ENCODE measurements at regions of chr14 and their contacts with region 1.

Region 1: GRCh38 chr14:83923842-83924241 is 1606.1 kb upstream of the FLRT2 start:
- DNase-seq: no peak
- H3K4me3 ChIP-seq: no peak overlapping the region
- H3K27ac ChIP-seq: no peak overlapping the region
- H3K4me1 ChIP-seq: no peaks in the 10 kb centered on the region
- CTCF ChIP-seq: no peak

Region 2: DNA sequence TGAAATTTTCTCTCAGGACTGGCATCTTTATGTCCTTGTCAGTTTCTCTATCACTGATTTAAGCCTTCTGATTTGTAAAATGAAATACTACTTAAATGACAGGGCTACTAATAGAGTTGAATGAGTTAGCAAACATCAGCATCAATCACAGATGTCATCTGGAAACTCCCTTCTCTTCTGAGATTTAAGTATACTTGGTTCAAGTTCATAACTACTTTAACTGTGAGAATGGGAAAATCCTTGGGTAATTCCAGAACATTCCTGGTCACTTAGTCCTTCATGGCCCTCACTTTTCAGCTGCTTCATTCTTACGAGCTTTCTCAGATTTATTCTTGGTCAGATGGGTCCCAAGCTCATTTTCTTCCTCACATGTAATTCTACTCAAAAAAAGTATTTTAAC is 49.2 kb before region 1 on chr14:
- CTCF ChIA-PET with region 1: no interaction called
- POLR2A ChIA-PET with region 1: no interaction called
- intact Hi-C with region 1: no loop called
- DNase-seq: no peak
- H3K4me3 ChIP-seq: no peak overlapping the region
- H3K27ac ChIP-seq: no peak overlapping the region
- H3K4me1 ChIP-seq: no peaks in the 10 kb centered on the region
- CTCF ChIP-seq: no peak

Region 3: GRCh38 chr14:84657911-84658310 is 734.1 kb after region 1 on chr14:
- CTCF ChIA-PET with region 1: no interaction called
- POLR2A ChIA-PET with region 1: interaction called, 11 read pairs
- intact Hi-C with region 1: no loop called
- DNase-seq: no peak
- H3K4me3 ChIP-seq: no peak overlapping the region
- H3K27ac ChIP-seq: no peak overlapping the region
- H3K4me1 ChIP-seq: no peaks in the 10 kb centered on the region
- CTCF ChIP-seq: no peak